A673 (cell line): ENCODE measurements at regions of chr11 and their contacts with region 1.

Region 1: GRCh38 chr11:16605894-16606783 is 132.3 kb upstream of the C11orf58 start:
- DNase-seq: peak; percentile 95
- H3K4me3 ChIP-seq: peak overlapping the region; percentile 93
- H3K27ac ChIP-seq: peak overlapping the region; percentile 93
- H3K4me1 ChIP-seq: peaks cover 24% of the 10 kb centered on the region
- H3K27me3 ChIP-seq: no peaks in the 10 kb centered on the region
- CTCF ChIP-seq: peak; percentile 95

Region 2: DNA sequence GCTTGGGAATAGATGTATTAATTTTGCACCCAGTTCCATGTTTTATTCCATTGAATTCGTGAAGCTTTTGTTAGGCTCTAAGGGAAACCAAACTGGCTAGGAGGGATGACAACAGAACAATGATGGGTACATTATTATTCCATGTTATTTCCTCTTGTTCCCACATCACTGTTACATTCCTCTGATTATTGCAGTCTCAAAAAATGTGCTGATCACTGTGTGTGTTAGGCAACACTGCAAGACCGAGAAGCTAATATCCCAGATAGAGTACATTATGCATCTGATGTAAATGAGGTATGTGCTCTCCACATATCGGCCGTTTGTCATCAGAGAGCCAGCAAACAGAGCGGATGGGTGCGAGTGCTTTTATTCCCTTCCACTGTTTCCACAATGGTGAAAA is 577.7 kb before region 1 on chr11:
- CTCF ChIA-PET with region 1: no interaction called
- POLR2A ChIA-PET with region 1: interaction called, 11 read pairs
- intact Hi-C with region 1: loop called (anchors 5 kb)
- DNase-seq: peak; percentile 29
- H3K4me3 ChIP-seq: no peak overlapping the region
- H3K27ac ChIP-seq: no peak overlapping the region
- H3K4me1 ChIP-seq: peaks cover 23% of the 10 kb centered on the region
- H3K27me3 ChIP-seq: no peaks in the 10 kb centered on the region
- CTCF ChIP-seq: no peak

Region 3: GRCh38 chr11:16169956-16170847 is 435.9 kb before region 1 on chr11:
- CTCF ChIA-PET with region 1: no interaction called
- POLR2A ChIA-PET with region 1: no interaction called
- intact Hi-C with region 1: loop called (anchors 10 kb)
- DNase-seq: peak; percentile 95
- H3K4me3 ChIP-seq: no peak overlapping the region
- H3K27ac ChIP-seq: peak overlapping the region; percentile 62
- H3K4me1 ChIP-seq: peaks cover 50% of the 10 kb centered on the region
- H3K27me3 ChIP-seq: no peaks in the 10 kb centered on the region
- CTCF ChIP-seq: no peak

Region 4: DNA sequence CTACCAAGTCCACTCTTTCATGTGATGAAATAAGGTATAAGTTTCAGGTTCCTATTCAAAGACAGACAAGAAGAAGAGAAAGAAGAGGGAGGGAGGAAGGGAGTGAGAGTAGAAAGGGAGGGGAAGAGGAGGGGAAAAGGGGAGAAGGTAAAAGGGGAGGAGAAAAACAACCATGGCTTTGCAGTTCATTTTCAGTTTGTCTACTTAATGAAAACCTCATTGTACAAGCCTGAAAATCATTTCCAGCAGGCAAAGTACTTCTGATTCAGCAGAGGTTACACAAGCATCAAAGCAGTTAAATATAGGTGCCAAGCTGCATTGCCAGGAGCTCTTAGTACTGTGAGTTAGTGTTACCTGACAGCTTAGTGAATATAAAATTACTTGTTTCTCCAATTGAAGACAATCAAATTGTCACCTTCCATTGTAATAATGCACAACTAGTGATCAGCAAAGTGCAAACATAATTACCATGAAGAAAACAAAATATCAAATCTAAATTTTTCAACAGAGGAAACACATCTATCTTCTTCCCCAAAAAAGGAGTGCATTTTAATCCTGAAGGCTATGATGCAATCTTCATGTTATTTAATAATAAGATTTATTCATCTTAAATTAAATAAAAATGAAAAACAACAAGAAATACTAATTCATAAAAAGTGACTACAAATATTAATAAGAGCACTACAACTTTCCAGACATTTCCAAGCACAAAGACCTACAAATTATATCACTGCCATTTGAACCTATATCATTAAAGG is 258.0 kb before region 1 on chr11:
- CTCF ChIA-PET with region 1: no interaction called
- POLR2A ChIA-PET with region 1: no interaction called
- intact Hi-C with region 1: loop called (anchors 2 kb)
- DNase-seq: peak; percentile 49
- H3K4me3 ChIP-seq: no peak overlapping the region
- H3K27ac ChIP-seq: peak overlapping the region; percentile 80
- H3K4me1 ChIP-seq: peaks cover 78% of the 10 kb centered on the region
- H3K27me3 ChIP-seq: no peaks in the 10 kb centered on the region
- CTCF ChIP-seq: no peak

Region 5: GRCh38 chr11:16372355-16372754 is 233.8 kb before region 1 on chr11:
- CTCF ChIA-PET with region 1: no interaction called
- POLR2A ChIA-PET with region 1: no interaction called
- intact Hi-C with region 1: loop called (anchors 5 kb)
- DNase-seq: no peak
- H3K4me3 ChIP-seq: no peak overlapping the region
- H3K27ac ChIP-seq: peak overlapping the region; percentile 52
- H3K4me1 ChIP-seq: peaks cover 34% of the 10 kb centered on the region
- H3K27me3 ChIP-seq: no peaks in the 10 kb centered on the region
- CTCF ChIP-seq: no peak

Region 6: DNA sequence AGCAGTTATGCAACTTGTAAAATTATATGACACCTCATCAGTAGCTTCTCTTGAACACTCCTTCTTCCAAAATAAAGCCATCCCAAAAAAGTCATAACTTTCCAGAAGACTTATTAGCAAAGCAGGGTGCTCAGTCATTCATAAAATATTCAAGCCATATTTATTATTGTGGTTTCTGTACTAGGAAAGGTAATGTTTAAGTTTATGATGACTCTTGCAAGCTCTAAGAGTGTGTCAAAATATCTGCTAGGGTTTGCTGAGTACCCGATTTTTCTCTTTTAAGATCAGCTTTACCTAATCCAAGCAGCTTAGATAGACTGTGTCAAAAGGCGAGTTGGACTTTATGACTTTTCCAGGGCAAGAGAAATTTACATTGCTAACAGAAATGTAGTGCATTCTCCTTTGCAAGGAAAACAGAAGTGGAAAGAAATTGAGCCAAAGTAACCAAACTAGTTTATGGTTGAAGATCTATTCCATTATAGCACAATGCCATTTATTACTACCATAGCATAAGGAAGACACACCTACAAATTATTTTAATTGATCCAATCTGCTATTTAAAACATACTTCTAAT is 151.8 kb before region 1 on chr11:
- CTCF ChIA-PET with region 1: no interaction called
- POLR2A ChIA-PET with region 1: no interaction called
- intact Hi-C with region 1: loop called (anchors 10 kb)
- DNase-seq: no peak
- H3K4me3 ChIP-seq: no peak overlapping the region
- H3K27ac ChIP-seq: no peak overlapping the region
- H3K4me1 ChIP-seq: no peaks in the 10 kb centered on the region
- H3K27me3 ChIP-seq: no peaks in the 10 kb centered on the region
- CTCF ChIP-seq: no peak

Region 7: DNA sequence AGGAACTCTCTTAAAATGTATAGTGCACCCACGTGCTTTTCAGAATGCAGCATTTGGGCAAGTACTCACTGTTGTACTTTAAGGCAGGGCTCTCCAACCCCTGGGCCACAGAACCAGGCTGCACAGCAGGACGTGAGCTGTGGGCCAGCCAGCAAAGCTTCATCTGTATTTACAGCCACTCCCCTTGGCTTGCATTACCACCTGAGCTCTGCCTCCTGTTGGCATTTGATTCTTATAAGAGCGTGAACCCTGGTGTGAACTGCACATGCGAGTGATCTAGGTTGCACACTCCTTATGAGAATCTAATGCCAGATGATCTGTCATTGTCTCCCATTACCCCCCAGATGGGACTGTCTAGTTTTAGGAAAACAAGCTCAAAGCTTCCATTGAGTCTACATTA is 135.3 kb after region 1 on chr11:
- CTCF ChIA-PET with region 1: no interaction called
- POLR2A ChIA-PET with region 1: no interaction called
- intact Hi-C with region 1: no loop called
- DNase-seq: no peak
- H3K4me3 ChIP-seq: no peak overlapping the region
- H3K27ac ChIP-seq: no peak overlapping the region
- H3K4me1 ChIP-seq: peaks cover 5% of the 10 kb centered on the region
- H3K27me3 ChIP-seq: no peaks in the 10 kb centered on the region
- CTCF ChIP-seq: no peak